ENCODE measurements at regions of chr11 and their contacts with region 1.

Region 1: DNA sequence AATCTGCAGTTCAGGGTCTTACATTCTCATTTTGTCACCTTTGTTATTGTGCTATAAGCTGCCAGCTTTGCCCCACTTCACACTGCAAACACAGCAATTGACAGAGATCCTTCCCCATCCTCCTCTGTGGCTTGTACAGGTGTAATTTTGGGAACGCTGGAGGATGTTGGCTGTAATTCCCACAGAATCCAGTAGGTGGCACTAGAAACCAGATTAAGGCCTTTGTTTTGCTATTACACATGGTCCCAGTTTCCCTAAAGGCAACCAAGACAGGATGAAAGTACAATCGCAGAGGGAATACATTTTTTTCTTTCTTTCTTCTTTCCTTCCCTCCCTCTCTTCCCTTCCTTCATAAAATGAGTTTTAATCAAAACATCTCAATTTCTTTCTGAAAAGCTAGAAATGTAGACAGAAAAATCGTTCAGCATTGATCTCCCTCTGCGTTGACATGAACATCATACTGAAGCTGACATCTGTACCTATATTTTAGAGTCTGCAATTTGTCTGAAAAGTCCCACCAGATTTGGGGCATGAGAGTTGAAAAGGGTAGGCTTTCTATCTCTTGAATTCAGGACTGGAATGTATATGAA is 21.3 kb upstream of the NELL1 start:
- DNase-seq: peak in 1 of 2 experiments; percentile 70
- H3K4me3 ChIP-seq: no peak overlapping the region
- H3K4me3 Mint-ChIP-seq: no peak overlapping the region
- H3K27ac Mint-ChIP-seq: no peak overlapping the region
- H3K4me1 ChIP-seq: no peaks in the 10 kb centered on the region
- H3K4me1 Mint-ChIP-seq: no peaks in the 10 kb centered on the region
- H3K27me3 ChIP-seq: no peaks in the 10 kb centered on the region; the same call in 1 of the 2 replicates
- H3K27me3 Mint-ChIP-seq: peaks cover 17% of the 10 kb centered on the region
- CTCF ChIP-seq: peak; percentile 86

Region 2: GRCh38 chr11:20097319-20098221 is 550.5 kb before region 1 on chr11:
- CTCF ChIA-PET with region 1: no interaction called
- POLR2A ChIA-PET with region 1: no interaction called
- intact Hi-C with region 1: no loop called
- DNase-seq: no peak
- H3K4me3 ChIP-seq: no peak overlapping the region
- H3K4me3 Mint-ChIP-seq: no peak overlapping the region
- H3K27ac Mint-ChIP-seq: no peak overlapping the region
- H3K4me1 ChIP-seq: no peaks in the 10 kb centered on the region
- H3K4me1 Mint-ChIP-seq: no peaks in the 10 kb centered on the region
- H3K27me3 ChIP-seq: no peaks in the 10 kb centered on the region
- H3K27me3 Mint-ChIP-seq: no peaks in the 10 kb centered on the region
- CTCF ChIP-seq: no peak

Region 3: GRCh38 chr11:20387241-20388095 is 260.6 kb before region 1 on chr11 and contains the start of gene PRMT3:
- CTCF ChIA-PET with region 1: no interaction called
- POLR2A ChIA-PET with region 1: no interaction called
- intact Hi-C with region 1: no loop called
- DNase-seq: peak; percentile 95 to 99
- H3K4me3 ChIP-seq: peak within 1 kb of the TSS; percentile 98
- H3K4me3 Mint-ChIP-seq: peak within 1 kb of the TSS; percentile 99
- H3K27ac Mint-ChIP-seq: peak within 1 kb of the TSS; percentile 99
- H3K4me1 ChIP-seq: peaks cover 11% of the 10 kb centered on the region; the same call in 1 of the 2 replicates
- H3K4me1 Mint-ChIP-seq: no peaks in the 10 kb centered on the region
- H3K27me3 ChIP-seq: no peaks in the 10 kb centered on the region
- H3K27me3 Mint-ChIP-seq: no peaks in the 10 kb centered on the region
- CTCF ChIP-seq: peak in 1 of 2 experiments; percentile 99
- total RNA-seq, gene PRMT3: 26.1 and 28.5 TPM in 2 replicates

Region 4: GRCh38 chr11:20873054-20873453 is 225.0 kb after region 1 on chr11:
- CTCF ChIA-PET with region 1: no interaction called
- POLR2A ChIA-PET with region 1: no interaction called
- intact Hi-C with region 1: loop called (anchors 1 kb)
- DNase-seq: peak; percentile 55 to 63
- H3K4me3 ChIP-seq: no peak overlapping the region
- H3K4me3 Mint-ChIP-seq: no peak overlapping the region
- H3K27ac Mint-ChIP-seq: no peak overlapping the region
- H3K4me1 ChIP-seq: no peaks in the 10 kb centered on the region
- H3K4me1 Mint-ChIP-seq: no peaks in the 10 kb centered on the region
- H3K27me3 ChIP-seq: no peaks in the 10 kb centered on the region
- H3K27me3 Mint-ChIP-seq: peaks cover 7% of the 10 kb centered on the region
- CTCF ChIP-seq: peak; percentile 61 to 68

Region 5: DNA sequence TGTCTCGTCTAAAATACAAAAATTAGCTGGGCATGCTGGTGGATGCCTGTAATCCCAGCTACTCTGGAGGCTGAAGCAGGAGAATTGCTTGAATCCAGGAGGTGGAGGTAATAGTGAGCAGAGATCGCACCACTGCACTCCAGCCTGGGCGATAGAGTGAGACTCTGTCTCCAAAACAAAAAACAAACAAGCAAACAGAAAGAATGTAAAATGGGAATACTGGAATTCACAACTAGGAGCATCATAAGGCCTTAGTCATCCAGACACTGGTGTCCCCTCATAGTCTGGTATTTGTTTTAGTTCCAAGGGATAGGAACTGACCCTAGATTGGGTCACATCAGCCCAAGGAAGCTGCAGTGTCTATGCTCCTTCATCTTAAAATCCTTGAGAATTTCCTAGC is 542.1 kb after region 1 on chr11:
- CTCF ChIA-PET with region 1: no interaction called
- POLR2A ChIA-PET with region 1: no interaction called
- intact Hi-C with region 1: loop called (anchors 1 kb)
- DNase-seq: no peak
- H3K4me3 ChIP-seq: no peak overlapping the region
- H3K4me3 Mint-ChIP-seq: no peak overlapping the region
- H3K27ac Mint-ChIP-seq: no peak overlapping the region
- H3K4me1 ChIP-seq: peaks cover 8% of the 10 kb centered on the region; the same call in 1 of the 2 replicates
- H3K4me1 Mint-ChIP-seq: no peaks in the 10 kb centered on the region
- H3K27me3 ChIP-seq: no peaks in the 10 kb centered on the region
- H3K27me3 Mint-ChIP-seq: no peaks in the 10 kb centered on the region
- CTCF ChIP-seq: no peak

Region 6: GRCh38 chr11:21511835-21512440 is 863.9 kb after region 1 on chr11:
- CTCF ChIA-PET with region 1: no interaction called
- POLR2A ChIA-PET with region 1: no interaction called
- intact Hi-C with region 1: loop called (anchors 1 kb)
- DNase-seq: peak; percentile 79 to 81
- H3K4me3 ChIP-seq: no peak overlapping the region
- H3K4me3 Mint-ChIP-seq: no peak overlapping the region
- H3K27ac Mint-ChIP-seq: no peak overlapping the region
- H3K4me1 ChIP-seq: no peaks in the 10 kb centered on the region
- H3K4me1 Mint-ChIP-seq: no peaks in the 10 kb centered on the region
- H3K27me3 ChIP-seq: no peaks in the 10 kb centered on the region
- H3K27me3 Mint-ChIP-seq: no peaks in the 10 kb centered on the region
- CTCF ChIP-seq: peak; percentile 66 to 89

Measured in Caco-2 (cell line).